OCI-LY7 (cell line): ENCODE measurements at regions of chr4 and their contacts with region 1.

Region 1: GRCh38 chr4:73446336-73446938 is 10.4 kb downstream of the AFP start:
- DNase-seq: peak; percentile 78
- H3K4me3 ChIP-seq: no peak overlapping the region
- H3K27ac ChIP-seq: no peak overlapping the region
- H3K4me1 ChIP-seq: no peaks in the 10 kb centered on the region
- CTCF ChIP-seq: peak; percentile 99

Region 2: DNA sequence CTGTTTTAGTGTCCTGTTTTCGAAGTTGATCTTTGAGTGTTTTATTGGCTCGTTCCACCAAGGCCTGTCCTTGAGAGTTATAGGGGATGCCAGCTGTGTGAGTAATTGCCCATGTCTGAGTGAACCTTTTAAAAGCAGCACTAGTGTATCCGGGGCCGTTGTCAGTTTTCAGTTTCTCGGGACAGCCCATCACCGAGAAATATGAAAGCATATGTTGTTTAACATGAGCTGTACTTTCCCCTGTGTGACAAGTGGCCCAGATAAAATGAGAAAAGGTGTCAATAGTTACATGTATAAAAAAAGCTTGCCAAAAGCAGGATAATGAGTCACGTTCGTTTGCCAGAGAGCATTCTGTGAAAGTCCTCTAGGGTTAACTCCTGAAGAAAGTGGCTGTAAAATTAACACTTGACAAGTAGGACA is 222.4 kb after region 1 on chr4:
- CTCF ChIA-PET with region 1: no interaction called
- POLR2A ChIA-PET with region 1: interaction called, 3 read pairs
- intact Hi-C with region 1: loop called (anchors 5 kb)
- DNase-seq: no peak
- H3K4me3 ChIP-seq: no peak overlapping the region
- H3K27ac ChIP-seq: no peak overlapping the region
- H3K4me1 ChIP-seq: no peaks in the 10 kb centered on the region
- CTCF ChIP-seq: no peak